ENCODE measurements at regions of chr11 and their contacts with region 1.

Region 1: DNA sequence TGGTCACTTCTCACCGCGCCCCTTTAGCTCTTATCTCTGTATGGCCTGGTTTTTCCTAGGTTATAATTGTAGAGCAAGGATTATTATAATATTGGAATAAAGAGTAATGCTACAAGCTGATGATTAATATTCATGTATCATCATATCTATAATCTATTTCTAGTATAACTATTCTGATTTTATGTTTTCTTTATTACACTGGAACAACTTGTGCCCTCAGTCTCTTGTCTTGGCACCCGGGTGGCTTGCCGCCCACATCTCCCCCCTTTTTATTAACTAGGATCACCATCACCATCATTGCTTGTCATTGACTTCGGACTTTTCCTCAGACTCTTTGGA is 11.0 kb downstream of the OR52K1 start:
- DNase-seq: no peak
- H3K4me3 ChIP-seq: no peak overlapping the region
- H3K27ac ChIP-seq: no peak overlapping the region
- H3K4me1 ChIP-seq: no peaks in the 10 kb centered on the region
- H3K27me3 ChIP-seq: no peaks in the 10 kb centered on the region
- CTCF ChIP-seq: peak in 1 of 2 donors; percentile 1

Region 2: DNA sequence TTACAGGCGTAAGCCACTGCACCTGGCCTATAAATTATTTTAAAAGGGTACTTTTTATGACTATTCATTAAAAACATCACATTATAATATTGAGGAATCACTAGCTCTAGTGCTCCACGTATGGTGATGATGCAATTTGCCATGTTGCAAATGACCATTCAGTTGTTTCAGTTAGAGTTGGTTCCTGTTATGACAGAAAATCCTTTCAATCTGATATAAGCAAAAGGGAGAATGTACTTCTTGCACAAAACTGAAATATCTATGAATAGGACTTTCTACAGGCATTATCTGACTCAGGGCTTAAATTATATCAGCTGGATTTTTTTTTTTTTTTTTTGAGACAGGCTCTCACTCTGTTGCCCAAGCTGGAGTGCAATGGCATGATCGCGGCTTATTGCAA is 444.4 kb before region 1 on chr11:
- CTCF ChIA-PET with region 1: no interaction called
- dilution Hi-C with region 1: no loop called
- in situ Hi-C with region 1: no loop called
- intact Hi-C with region 1: no loop called
- DNase-seq: no peak
- H3K4me3 ChIP-seq: no peak overlapping the region
- H3K27ac ChIP-seq: no peak overlapping the region
- H3K4me1 ChIP-seq: peaks cover 27% of the 10 kb centered on the region
- H3K27me3 ChIP-seq: no peaks in the 10 kb centered on the region
- CTCF ChIP-seq: no peak

Region 3: DNA sequence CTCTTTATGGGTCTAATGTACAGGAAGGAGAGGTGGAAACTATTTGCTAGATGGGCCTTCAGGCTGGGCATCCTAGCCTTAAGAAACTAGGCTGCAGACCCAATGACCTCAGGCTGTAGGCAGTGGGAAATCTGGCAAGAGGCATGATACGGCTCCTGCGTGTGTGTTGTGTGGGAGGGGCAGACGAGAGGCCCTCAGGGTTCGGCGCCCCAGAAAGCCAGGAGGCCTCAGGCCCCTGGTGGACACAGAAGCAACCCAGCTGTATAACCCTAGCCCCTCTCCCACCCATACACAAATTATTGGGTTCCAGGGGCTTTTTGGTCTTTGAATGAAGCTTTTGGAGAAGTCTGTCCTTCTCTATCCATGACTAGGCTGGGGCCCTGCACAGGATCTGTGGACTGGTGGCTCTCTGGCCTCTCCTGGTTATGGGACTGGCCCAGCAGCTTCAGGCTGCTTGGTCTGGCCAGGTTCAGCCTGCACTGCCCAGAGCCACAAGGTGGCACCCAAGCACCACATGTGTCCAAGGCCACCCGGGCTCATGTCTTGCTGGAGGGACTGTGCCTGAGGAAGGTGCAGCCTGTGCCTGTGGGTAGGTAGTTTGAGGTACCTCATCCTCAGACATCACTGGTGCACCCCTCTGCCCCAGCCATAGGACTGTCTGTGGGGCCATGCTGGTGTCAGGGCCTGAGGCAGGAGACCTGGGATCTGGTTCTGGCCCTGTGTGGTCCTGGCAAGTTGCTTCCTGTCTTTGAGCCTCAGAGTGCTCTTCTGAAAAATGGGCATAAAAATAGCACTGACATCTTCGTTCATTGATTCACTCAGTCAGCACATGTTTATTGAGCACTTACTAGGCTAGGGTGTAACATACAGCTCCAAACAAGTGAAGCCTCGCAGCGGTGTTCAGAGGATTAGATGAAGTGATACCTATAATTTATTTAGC is 311.4 kb before region 1 on chr11:
- CTCF ChIA-PET with region 1: interaction called, 3 read pairs
- dilution Hi-C with region 1: no loop called
- in situ Hi-C with region 1: loop called in 1 of 2 experiments (anchors 5 kb)
- intact Hi-C with region 1: loop called (anchors 1 kb)
- DNase-seq: peak; percentile 44
- H3K4me3 ChIP-seq: no peak overlapping the region
- H3K27ac ChIP-seq: no peak overlapping the region
- H3K4me1 ChIP-seq: no peaks in the 10 kb centered on the region
- H3K27me3 ChIP-seq: no peaks in the 10 kb centered on the region
- CTCF ChIP-seq: peak; percentile 81 to 90

Region 4: DNA sequence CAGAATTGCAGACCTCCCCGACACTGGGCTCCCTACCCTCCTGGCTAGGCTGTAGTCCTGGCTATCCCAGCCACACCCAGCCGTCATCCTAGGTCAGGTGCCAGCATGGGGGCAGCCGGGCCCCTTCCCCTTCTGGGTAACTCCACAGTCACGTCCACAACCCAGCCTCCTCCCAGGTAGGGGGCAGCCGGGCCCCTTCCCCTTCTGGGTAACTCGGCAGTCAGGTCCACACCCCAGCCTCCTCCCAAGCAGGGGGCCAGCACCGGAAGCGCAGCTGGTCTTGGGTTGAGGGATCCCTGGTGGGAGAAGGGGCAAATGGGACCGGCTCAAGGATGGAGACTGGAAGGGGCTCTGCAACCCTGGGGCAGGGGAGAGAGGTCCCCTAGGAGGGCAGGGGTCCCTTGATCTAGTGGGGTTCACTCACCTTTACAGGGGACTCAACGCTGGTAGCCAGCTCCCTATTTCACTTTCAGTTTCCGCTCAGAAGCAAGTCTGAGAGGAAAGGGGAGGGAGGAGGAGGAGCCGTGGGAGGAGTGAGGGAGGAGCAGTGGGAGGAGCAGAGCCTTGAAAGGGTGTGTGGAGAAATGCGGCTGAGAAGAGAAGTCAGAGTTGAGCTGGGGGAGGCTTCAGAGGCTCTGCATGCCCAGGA is 100.1 kb before region 1 on chr11 and contains the start of gene TRIM21:
- CTCF ChIA-PET with region 1: no interaction called
- dilution Hi-C with region 1: no loop called
- in situ Hi-C with region 1: no loop called
- intact Hi-C with region 1: loop called (anchors 5 kb)
- DNase-seq: peak; percentile 82
- H3K4me3 ChIP-seq: peak within 1 kb of the TSS; percentile 91 to 94 (median 93)
- H3K27ac ChIP-seq: peak within 1 kb of the TSS; percentile 52
- H3K4me1 ChIP-seq: peaks cover 5% of the 10 kb centered on the region
- H3K27me3 ChIP-seq: no peaks in the 10 kb centered on the region
- CTCF ChIP-seq: no peak
- total RNA-seq, gene TRIM21: 10.2 to 14.5 TPM

Region 5: GRCh38 chr11:4441515-4441914 is 51.9 kb before region 1 on chr11:
- CTCF ChIA-PET with region 1: no interaction called
- dilution Hi-C with region 1: no loop called
- in situ Hi-C with region 1: no loop called
- intact Hi-C with region 1: loop called (anchors 5 kb)
- DNase-seq: no peak
- H3K4me3 ChIP-seq: no peak overlapping the region
- H3K27ac ChIP-seq: no peak overlapping the region
- H3K4me1 ChIP-seq: no peaks in the 10 kb centered on the region
- H3K27me3 ChIP-seq: no peaks in the 10 kb centered on the region
- CTCF ChIP-seq: no peak

Region 6: DNA sequence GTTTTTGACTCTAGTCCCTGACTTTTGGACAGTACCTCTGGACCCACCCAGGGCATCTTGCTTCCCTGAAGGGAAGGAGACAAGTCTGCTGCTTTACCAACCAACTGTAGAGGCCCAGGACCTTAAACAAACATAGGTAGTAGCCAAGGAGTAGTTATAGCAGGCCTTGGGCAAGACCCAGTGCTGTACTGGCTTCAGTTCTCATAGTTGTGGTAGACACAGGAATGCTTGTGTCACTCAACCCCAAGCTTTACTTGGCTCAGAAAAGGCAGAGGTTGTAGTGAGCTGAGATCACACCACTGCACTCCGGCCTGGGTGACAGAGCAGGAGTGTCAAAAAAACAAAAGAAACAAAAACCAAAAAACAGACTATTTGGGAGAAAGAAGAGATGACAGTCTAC is 30.2 kb after region 1 on chr11:
- CTCF ChIA-PET with region 1: no interaction called
- dilution Hi-C with region 1: no loop called
- in situ Hi-C with region 1: no loop called
- intact Hi-C with region 1: no loop called
- DNase-seq: peak; percentile 17
- H3K4me3 ChIP-seq: no peak overlapping the region
- H3K27ac ChIP-seq: no peak overlapping the region
- H3K4me1 ChIP-seq: no peaks in the 10 kb centered on the region
- H3K27me3 ChIP-seq: peaks cover 1% of the 10 kb centered on the region
- CTCF ChIP-seq: no peak

Region 7: DNA sequence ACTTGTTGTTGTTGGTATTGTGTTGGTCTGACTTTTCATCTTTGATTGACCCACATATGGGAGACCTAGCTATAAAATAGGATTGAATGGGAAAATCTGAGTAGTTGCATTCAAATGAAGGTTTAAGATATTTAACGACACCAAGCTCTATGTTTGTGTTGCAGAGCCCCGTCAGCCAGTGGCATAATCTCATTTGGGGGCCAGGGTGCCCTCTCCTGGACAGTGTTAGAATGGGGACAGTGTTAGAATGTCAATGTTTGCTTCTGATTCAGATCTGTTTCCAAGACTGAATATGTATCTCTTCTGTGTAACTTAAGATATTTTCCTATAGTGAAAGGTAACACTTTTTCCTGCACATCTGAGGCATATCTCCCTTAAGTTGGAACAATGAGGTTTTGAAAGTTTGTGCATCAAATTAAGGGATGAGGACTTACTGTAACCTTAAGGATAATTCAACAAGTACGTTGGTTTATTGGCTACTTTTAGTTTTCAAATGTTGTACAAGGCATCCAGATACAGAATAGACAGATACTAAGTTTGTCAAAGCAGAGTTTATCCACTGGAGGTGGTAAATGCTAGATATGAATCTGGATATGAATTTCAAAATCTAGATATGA is 46.3 kb after region 1 on chr11:
- CTCF ChIA-PET with region 1: no interaction called
- dilution Hi-C with region 1: no loop called
- in situ Hi-C with region 1: no loop called
- intact Hi-C with region 1: loop called (anchors 5 kb)
- DNase-seq: peak; percentile 14
- H3K4me3 ChIP-seq: no peak overlapping the region
- H3K27ac ChIP-seq: no peak overlapping the region
- H3K4me1 ChIP-seq: peaks cover 8% of the 10 kb centered on the region
- H3K27me3 ChIP-seq: no peaks in the 10 kb centered on the region
- CTCF ChIP-seq: peak; percentile 83 to 87

Region 8: GRCh38 chr11:4551346-4551979 is 58.0 kb after region 1 on chr11:
- CTCF ChIA-PET with region 1: no interaction called
- dilution Hi-C with region 1: no loop called
- in situ Hi-C with region 1: no loop called
- intact Hi-C with region 1: loop called (anchors 5 kb)
- DNase-seq: no peak
- H3K4me3 ChIP-seq: no peak overlapping the region
- H3K27ac ChIP-seq: no peak overlapping the region
- H3K4me1 ChIP-seq: no peaks in the 10 kb centered on the region
- H3K27me3 ChIP-seq: no peaks in the 10 kb centered on the region
- CTCF ChIP-seq: peak; percentile 30 to 47